ENCODE measurements at regions of chr6 and their contacts with region 1.

Region 1: GRCh38 chr6:13908955-13909381 is 15.8 kb upstream of the RNF182 start:
- DNase-seq: peak; percentile 49
- H3K4me3 Mint-ChIP-seq: no peak overlapping the region
- H3K27ac Mint-ChIP-seq: no peak overlapping the region
- H3K4me1 Mint-ChIP-seq: no peaks in the 10 kb centered on the region
- H3K27me3 Mint-ChIP-seq: peaks cover 28% of the 10 kb centered on the region

Region 2: DNA sequence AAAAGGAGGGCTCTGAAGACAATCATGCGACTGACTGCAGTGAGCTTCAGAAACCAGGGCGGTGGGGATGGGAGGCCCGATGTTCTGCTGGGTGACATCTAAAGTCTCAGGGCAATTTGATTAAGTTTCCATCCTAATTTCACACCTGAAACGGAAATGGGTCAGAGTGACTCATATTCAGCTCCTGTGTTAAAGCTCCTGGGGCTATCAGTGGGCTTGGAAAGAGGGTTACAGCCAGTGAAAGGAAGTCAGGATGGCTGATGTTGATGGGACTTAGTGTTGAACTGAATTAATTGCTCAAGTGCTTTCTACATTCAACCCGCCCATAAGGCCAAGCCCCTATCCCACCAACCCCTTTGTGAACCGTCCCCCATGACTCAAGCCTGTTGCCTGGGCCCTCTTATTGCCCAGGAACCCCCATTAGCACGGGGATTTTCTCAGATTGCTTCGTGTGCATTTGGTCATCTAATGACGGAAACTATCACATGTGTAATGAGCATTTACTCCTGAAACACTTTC is 533.5 kb before region 1 on chr6:
- CTCF ChIA-PET with region 1: no interaction called
- POLR2A ChIA-PET with region 1: no interaction called
- intact Hi-C with region 1: no loop called
- DNase-seq: peak; percentile 72
- H3K4me3 Mint-ChIP-seq: no peak overlapping the region
- H3K27ac Mint-ChIP-seq: no peak overlapping the region
- H3K4me1 Mint-ChIP-seq: peaks cover 20% of the 10 kb centered on the region
- H3K27me3 Mint-ChIP-seq: no peaks in the 10 kb centered on the region

Region 3: GRCh38 chr6:13924146-13924948 is 15.4 kb after region 1 on chr6:
- CTCF ChIA-PET with region 1: interaction called, 19 read pairs
- POLR2A ChIA-PET with region 1: no interaction called
- intact Hi-C with region 1: no loop called
- DNase-seq: no peak
- H3K4me3 Mint-ChIP-seq: peak overlapping the region; percentile 69
- H3K27ac Mint-ChIP-seq: no peak overlapping the region
- H3K4me1 Mint-ChIP-seq: peaks cover 14% of the 10 kb centered on the region
- H3K27me3 Mint-ChIP-seq: peaks cover 56% of the 10 kb centered on the region

Region 4: GRCh38 chr6:14037402-14038277 is 128.7 kb after region 1 on chr6:
- CTCF ChIA-PET with region 1: interaction called, 70 read pairs
- POLR2A ChIA-PET with region 1: no interaction called
- intact Hi-C with region 1: no loop called
- DNase-seq: peak; percentile 25
- H3K4me3 Mint-ChIP-seq: no peak overlapping the region
- H3K27ac Mint-ChIP-seq: no peak overlapping the region
- H3K4me1 Mint-ChIP-seq: peaks cover 9% of the 10 kb centered on the region
- H3K27me3 Mint-ChIP-seq: peaks cover 27% of the 10 kb centered on the region

Region 5: DNA sequence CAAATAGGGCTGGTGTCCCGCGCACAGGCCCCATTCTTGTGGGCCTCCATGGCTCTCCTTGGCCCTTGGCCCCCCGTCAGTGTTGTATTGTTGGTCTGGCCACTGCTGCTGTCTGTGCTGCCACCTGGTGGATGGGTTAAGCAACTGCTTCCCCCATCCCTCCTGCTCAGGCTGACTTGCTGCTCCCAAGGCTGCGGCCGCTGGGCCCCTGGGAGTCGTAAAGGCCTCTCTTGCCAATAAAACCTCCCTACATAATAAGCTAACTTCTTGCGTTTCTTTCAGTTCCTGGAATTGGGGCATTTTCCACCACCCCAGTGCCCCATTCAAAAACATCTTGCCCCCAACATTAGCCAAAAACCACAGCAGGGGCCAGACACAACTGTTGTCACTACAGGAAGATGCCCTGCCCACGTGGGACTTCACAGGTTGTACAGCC is 235.7 kb after region 1 on chr6:
- CTCF ChIA-PET with region 1: interaction called, 42 read pairs
- POLR2A ChIA-PET with region 1: no interaction called
- intact Hi-C with region 1: loop called (anchors 1 kb)
- DNase-seq: peak; percentile 81
- H3K4me3 Mint-ChIP-seq: no peak overlapping the region
- H3K27ac Mint-ChIP-seq: no peak overlapping the region
- H3K4me1 Mint-ChIP-seq: no peaks in the 10 kb centered on the region
- H3K27me3 Mint-ChIP-seq: no peaks in the 10 kb centered on the region

Measured in activated CD4-positive, alpha-beta memory T cell treated with anti-CD3 and anti-CD28 coated beads for 36 hours (primary cell).